Spleen (tissue), 13 donors: ENCODE measurements at regions of chr9 and their contacts with region 1.

Region 1: DNA sequence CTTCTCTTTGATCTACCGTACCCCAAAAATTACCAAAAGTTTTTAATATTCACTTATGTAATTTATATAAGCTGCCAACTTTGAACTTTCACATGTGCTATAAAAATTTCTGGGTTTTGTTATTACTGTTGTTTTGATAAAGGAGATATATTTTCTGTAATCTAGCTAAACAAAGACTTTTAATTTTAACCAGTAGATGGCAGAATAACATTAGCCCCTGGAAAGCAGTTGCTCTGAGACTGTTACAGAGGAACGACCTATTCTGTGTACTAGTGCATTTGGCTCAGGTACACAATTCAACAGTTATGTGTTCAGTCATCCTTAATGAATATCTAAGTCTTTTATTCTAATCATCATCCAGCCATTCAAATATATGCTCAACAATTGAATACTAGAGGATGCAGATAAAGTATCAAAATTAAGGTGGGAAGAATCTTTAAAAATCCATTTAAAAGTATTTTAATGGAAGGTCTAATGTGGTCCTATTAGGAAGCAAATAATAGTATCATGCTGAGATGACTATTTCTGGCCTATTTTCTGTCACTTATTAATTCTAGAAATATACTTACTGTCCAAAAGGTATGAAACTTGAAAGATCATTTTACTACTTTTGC is 8.6 kb downstream of the KLHL9 start:
- DNase-seq: no peak
- H3K4me3 ChIP-seq: no peak overlapping the region
- H3K27ac ChIP-seq: no peak overlapping the region
- H3K4me1 ChIP-seq: peaks cover 22 to 72% (median 54%) of the 10 kb centered on the region in 6 donors
- H3K27me3 ChIP-seq: no peaks in the 10 kb centered on the region
- CTCF ChIP-seq: peak; percentile 16 to 74 (median 62)
- POLR2A ChIP-seq: no peak

Region 2: DNA sequence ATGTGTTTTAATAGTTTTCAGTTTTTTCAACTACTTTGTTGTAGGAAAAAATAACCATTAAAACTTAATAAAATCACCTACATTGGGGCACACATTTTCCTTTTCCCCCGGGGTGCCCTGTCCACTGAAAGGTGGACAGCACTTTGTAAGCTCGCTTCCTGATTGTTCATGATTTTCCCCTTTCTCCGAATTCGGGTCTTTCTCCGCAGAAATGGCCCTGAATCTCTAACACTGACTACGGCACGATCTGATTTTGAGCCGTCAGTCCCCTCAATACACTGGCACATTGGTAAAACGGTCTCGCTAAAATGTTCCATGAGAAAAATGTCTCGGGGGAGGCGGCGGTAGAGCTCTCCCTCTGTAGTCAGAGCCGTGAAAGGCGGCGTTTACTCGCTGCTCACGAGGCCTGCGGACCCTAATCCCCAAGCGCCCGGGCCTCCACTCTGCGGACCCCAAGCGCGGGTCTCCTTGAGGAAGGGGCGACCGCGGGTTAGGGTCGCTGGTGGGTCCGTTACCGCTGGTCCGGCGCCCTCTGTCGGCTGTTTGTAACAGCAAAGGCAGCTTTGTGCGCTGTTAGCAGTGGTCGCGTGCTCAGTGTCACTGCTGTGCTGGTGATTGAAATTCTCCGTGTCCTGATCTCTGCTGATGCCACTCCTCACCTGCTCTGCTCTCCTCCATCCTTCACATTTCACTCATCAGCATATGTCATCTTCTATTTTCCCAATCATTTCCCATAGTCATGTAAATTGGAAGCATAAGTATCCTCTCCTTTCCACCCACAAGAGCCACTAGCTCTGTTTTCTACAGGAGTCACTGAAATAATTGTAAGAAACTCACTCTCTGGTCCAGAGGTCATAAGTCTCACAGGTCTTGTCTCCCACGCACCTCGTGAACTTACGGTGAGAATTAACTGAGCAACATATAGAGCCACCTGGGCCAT is 69.4 kb after region 1 on chr9:
- intact Hi-C with region 1: loop called (anchors 5 kb)
- DNase-seq: peak; percentile 88
- H3K4me3 ChIP-seq: peak overlapping the region; percentile 26 to 73 (median 40)
- H3K27ac ChIP-seq: peak overlapping the region in 3 of 8 donors; percentile 33 to 49 (median 45)
- H3K4me1 ChIP-seq: peaks cover 0 to 30% (median 14%) of the 10 kb centered on the region in 6 donors
- H3K27me3 ChIP-seq: peaks cover 0 to 90% (median 9%) of the 10 kb centered on the region in 7 donors
- CTCF ChIP-seq: peak; percentile 22 to 80 (median 67)
- POLR2A ChIP-seq: no peak

Region 3: GRCh38 chr9:21491742-21492141 is 165.1 kb after region 1 on chr9:
- intact Hi-C with region 1: no loop called
- DNase-seq: no peak
- H3K4me3 ChIP-seq: no peak overlapping the region
- H3K27ac ChIP-seq: no peak overlapping the region
- H3K4me1 ChIP-seq: no peaks in the 10 kb centered on the region
- H3K27me3 ChIP-seq: peaks cover 0 to 4% (median 0%) of the 10 kb centered on the region in 7 donors
- CTCF ChIP-seq: no peak
- POLR2A ChIP-seq: no peak

Region 4: GRCh38 chr9:21789541-21790037 is 463.0 kb after region 1 on chr9:
- intact Hi-C with region 1: loop called (anchors 5 kb)
- DNase-seq: no peak
- H3K4me3 ChIP-seq: peak overlapping the region in 4 of 8 donors; percentile 4 to 57 (median 24)
- H3K27ac ChIP-seq: peak overlapping the region in 1 of 8 donors; percentile 9
- H3K4me1 ChIP-seq: peaks cover 0 to 6% (median 2%) of the 10 kb centered on the region in 6 donors
- H3K27me3 ChIP-seq: peaks cover 0 to 17% (median 0%) of the 10 kb centered on the region in 7 donors
- CTCF ChIP-seq: peak; percentile 58 to 90 (median 77)
- POLR2A ChIP-seq: no peak